IMR-90 (cell line): ENCODE measurements at regions of chr11 and their contacts with region 1.

Region 1: DNA sequence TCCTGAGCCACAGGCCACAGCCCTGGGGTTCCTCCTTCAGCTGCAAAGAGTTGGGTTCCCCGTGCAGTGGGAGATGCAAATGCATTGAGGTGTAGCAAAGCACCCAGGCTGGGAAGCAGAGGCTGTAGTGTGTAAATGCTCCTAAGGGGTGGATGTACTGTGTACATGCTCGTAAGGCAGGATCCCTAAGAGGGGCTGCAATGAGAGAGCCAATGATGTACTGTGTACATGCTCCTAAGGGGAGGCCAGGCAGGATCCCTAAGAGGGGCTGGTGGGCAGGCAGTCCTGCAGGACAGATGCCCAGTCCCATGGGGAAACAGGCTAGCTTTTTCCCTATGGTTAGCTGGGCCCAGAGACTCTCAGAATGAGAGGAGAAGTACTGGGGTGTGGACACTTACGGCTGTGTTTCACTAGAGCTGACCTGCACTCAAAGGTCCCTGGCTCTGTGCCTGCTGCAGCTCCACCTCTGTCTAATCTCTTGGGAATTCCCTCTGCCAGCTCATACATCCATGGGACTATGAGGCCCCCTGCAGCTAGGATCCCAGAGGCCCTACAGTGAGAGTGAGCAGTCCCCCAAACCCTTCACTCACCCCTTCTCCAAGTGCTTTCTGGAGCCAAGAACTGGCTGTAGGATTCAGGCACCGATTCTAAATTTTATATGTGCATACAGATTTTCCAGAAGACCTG is 261.9 kb upstream of the LUZP2 start:
- DNase-seq: peak; percentile 79
- ATAC-seq: peak; percentile 64
- H3K4me3 ChIP-seq: no peak overlapping the region
- H3K27ac ChIP-seq: no peak overlapping the region; the same call in 1 of the 2 replicates
- H3K4me1 ChIP-seq: peaks cover 8% of the 10 kb centered on the region
- H3K27me3 ChIP-seq: no peaks in the 10 kb centered on the region
- CTCF ChIP-seq: peak; percentile 56
- POLR2A ChIP-seq: no peak
- RAD21 ChIP-seq: peak; percentile 73

Region 2: DNA sequence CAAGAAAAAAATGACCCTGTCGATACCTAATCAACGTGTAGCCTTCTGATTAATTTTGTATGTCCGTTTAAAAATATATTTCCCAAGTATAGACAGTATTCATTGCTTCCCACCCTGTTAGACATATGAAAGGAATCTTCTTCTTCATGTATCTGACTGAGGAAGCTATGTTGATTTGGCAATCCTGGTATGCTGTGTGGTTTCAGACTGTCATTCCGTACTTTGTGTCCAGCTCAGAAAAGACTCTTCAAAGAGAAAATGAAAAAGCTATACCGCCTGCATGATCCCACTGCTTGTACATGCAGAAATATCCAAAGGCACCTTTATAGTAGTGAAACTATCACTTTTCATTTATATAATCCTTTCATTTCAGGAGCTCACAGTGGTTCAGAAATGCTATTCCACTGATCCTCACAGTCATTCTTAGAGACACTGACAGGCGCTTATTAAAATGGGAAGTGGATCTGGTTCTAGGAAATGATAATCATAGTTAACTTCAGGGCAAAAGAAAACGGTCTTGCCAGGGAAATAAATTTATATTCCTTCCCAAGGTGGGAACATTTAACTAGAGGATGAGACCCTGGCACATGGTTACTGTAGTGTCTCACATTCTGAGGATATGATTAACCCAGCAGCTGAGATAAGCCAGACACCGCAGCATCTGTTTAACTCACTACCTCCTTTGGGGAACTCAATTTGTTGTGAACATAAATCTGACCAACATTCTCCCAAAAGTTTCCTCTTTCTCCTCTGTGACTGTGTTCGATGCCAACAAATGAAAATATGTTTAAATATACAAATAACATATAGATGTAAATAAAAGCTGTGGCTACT is 337.3 kb before region 1 on chr11:
- CTCF ChIA-PET with region 1: no interaction called
- POLR2A ChIA-PET with region 1: no interaction called
- dilution Hi-C with region 1: no loop called
- in situ Hi-C with region 1: no loop called
- intact Hi-C with region 1: loop called (anchors 2 kb)
- DNase-seq: peak; percentile 94
- ATAC-seq: peak; percentile 92
- H3K4me3 ChIP-seq: peak overlapping the region; percentile 29; the same call in 1 of the 2 replicates
- H3K27ac ChIP-seq: peak overlapping the region; percentile 99
- H3K4me1 ChIP-seq: peaks cover 13% of the 10 kb centered on the region
- H3K27me3 ChIP-seq: no peaks in the 10 kb centered on the region
- CTCF ChIP-seq: no peak
- POLR2A ChIP-seq: no peak
- RAD21 ChIP-seq: no peak; the same call in 1 of the 2 replicates

Region 3: GRCh38 chr11:24661331-24661730 is 426.4 kb after region 1 on chr11:
- CTCF ChIA-PET with region 1: no interaction called
- POLR2A ChIA-PET with region 1: no interaction called
- dilution Hi-C with region 1: no loop called
- in situ Hi-C with region 1: no loop called
- intact Hi-C with region 1: no loop called
- DNase-seq: no peak
- ATAC-seq: no peak
- H3K4me3 ChIP-seq: no peak overlapping the region
- H3K27ac ChIP-seq: no peak overlapping the region
- H3K4me1 ChIP-seq: no peaks in the 10 kb centered on the region
- H3K27me3 ChIP-seq: no peaks in the 10 kb centered on the region
- CTCF ChIP-seq: no peak
- POLR2A ChIP-seq: no peak
- RAD21 ChIP-seq: no peak